ENCODE measurements at regions of chr1 and their contacts with region 1.

Region 1: DNA sequence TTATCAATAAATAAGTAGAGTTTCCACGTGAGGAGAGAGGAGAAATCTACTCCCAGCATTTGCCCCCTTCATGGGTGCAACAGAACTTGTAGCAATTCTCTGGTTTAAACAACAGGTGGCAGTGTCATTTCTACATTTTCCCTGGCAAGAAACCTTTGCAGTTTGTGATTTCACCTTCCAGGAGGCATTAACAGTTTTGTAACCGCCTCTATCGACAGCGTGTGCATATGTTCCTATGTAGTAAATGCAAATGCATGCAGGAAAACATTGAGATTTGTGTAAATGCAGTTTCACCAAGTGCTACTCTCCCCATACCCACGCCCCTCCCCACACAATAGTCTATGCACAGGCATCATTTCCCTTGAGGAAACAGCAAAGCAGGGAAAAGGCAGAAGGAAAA is 494.7 kb downstream of the SMYD3 start:
- DNase-seq: no peak
- H3K4me3 ChIP-seq: no peak overlapping the region
- H3K27me3 ChIP-seq: no peaks in the 10 kb centered on the region
- CTCF ChIP-seq: peak; percentile 63

Region 2: GRCh38 chr1:246280551-246280950 is 268.2 kb after region 1 on chr1:
- CTCF ChIA-PET with region 1: interaction called, 11 read pairs
- POLR2A ChIA-PET with region 1: no interaction called
- DNase-seq: no peak
- H3K4me3 ChIP-seq: no peak overlapping the region
- H3K27me3 ChIP-seq: no peaks in the 10 kb centered on the region
- CTCF ChIP-seq: peak; percentile 24; the same call in 1 of the 2 replicates

Region 3: GRCh38 chr1:246450611-246451251 is 438.4 kb after region 1 on chr1:
- CTCF ChIA-PET with region 1: interaction called, 15 read pairs
- POLR2A ChIA-PET with region 1: no interaction called
- DNase-seq: peak; percentile 12
- H3K4me3 ChIP-seq: no peak overlapping the region
- H3K27me3 ChIP-seq: no peaks in the 10 kb centered on the region
- CTCF ChIP-seq: peak; percentile 61